Dendritic cell treated with granulocyte-macrophage colony-stimulating factor and Interleukin-4, amounts not matched to agents 40 ng/mL and 50 ng/mL, for 4 days (primary cell): ENCODE measurements at regions of chr18 and their contacts with region 1.

Region 1: DNA sequence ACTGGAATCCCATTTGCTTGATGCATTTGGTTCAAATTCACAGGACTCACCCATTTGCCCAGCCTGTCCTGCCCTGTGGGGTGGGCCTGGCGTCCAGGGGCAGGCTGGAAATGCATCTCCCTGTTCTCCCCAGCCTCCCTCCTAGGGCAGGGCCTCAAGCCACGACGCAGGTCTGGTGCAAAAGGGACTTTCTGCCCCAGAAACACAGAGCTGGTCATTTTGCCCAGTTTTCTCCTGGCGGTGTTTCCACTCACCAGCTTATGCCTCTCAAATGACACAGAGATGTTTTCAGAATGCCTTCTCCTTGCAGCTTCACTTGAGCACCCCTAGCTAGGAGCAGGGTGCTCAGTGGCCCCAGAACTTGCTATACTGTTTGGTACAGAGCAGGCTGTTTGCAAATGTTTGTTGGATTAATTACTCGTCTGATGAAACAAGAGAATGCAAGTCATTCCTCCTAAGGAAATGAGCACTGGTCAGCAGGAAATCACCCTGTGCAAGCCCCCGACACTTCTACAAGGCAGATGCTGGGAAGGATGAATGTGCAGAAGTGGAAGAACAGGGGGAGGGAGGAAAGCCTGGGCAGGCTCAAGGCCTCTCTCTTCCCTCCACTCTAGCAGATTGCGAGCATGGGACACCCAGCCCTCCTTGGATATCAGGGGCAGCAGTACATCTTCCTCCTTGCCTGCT is 164.3 kb upstream of the APCDD1 start:
- H3K4me3 Mint-ChIP-seq: no peak overlapping the region
- H3K27ac Mint-ChIP-seq: peak overlapping the region; percentile 86
- H3K4me1 Mint-ChIP-seq: peaks cover 71% of the 10 kb centered on the region
- H3K27me3 Mint-ChIP-seq: no peaks in the 10 kb centered on the region

Region 2: GRCh38 chr18:10261302-10262276 is 28.5 kb before region 1 on chr18:
- intact Hi-C with region 1: loop called (anchors 2 kb)
- H3K4me3 Mint-ChIP-seq: no peak overlapping the region
- H3K27ac Mint-ChIP-seq: no peak overlapping the region
- H3K4me1 Mint-ChIP-seq: peaks cover 49% of the 10 kb centered on the region
- H3K27me3 Mint-ChIP-seq: no peaks in the 10 kb centered on the region

Region 3: DNA sequence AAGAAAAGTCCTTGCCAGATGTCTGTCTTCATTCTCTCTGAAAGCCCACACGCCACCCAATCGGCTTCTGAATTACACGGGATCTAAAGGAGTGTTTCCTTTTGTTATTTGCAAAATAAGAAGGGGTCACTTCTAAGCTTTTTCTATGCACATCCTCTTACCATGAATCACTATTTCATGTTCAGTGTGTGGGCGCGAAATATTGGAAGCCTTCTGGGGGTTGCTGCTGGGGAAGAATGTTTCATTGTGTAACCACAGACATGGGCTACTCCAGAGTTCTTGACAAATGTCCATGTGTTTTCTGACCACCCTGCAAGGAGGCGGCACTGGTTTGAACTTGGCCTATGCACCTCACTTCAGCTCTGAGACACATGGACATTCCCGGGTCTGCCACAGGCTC is 30.7 kb after region 1 on chr18:
- intact Hi-C with region 1: no loop called
- H3K4me3 Mint-ChIP-seq: no peak overlapping the region
- H3K27ac Mint-ChIP-seq: no peak overlapping the region
- H3K4me1 Mint-ChIP-seq: peaks cover 42% of the 10 kb centered on the region
- H3K27me3 Mint-ChIP-seq: no peaks in the 10 kb centered on the region

Region 4: GRCh38 chr18:10353791-10354190 is 63.7 kb after region 1 on chr18:
- intact Hi-C with region 1: no loop called
- H3K4me3 Mint-ChIP-seq: no peak overlapping the region
- H3K27ac Mint-ChIP-seq: no peak overlapping the region
- H3K4me1 Mint-ChIP-seq: peaks cover 14% of the 10 kb centered on the region
- H3K27me3 Mint-ChIP-seq: no peaks in the 10 kb centered on the region

Region 5: GRCh38 chr18:10476338-10476791 is 186.3 kb after region 1 on chr18:
- intact Hi-C with region 1: loop called (anchors 5 kb)
- H3K4me3 Mint-ChIP-seq: no peak overlapping the region
- H3K27ac Mint-ChIP-seq: no peak overlapping the region
- H3K4me1 Mint-ChIP-seq: peaks cover 62% of the 10 kb centered on the region
- H3K27me3 Mint-ChIP-seq: peaks cover 19% of the 10 kb centered on the region